Mammary epithelial cell (primary cell): ENCODE measurements at regions of chr7 and their contacts with region 1.

Region 1: DNA sequence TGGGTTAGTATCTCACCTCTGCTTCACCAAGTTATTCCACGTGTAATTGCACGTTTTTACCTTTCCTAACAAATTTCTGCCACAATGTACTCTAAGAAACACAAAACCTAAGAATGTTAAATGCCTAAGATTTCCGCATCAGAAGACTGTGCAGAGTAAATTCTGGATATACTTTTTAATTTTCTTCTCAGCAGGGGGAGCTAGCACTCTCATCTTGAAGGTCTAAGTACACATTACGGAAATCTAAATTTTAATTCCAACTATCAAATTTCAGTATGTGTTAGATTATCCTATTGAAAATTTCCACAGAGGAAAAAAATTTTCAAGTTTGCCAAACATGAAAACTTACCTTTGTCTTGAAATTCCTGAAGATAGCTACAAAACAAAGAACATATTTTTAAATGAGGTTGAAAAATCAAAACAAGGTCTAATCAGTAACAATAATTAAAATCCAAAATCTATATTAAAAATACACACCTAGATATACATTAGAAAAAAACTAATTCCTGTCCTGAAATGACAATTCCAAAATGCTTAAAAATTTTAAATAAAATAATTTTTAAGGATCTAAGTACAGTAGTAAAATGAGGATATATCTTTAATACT is 10.5 kb downstream of the SKAP2 start:
- DNase-seq: peak; percentile 52
- H3K4me3 ChIP-seq: peak overlapping the region in 1 of 3 experiments; percentile 19
- H3K27ac ChIP-seq: peak overlapping the region; percentile 96
- H3K4me1 ChIP-seq: peaks cover 24% of the 10 kb centered on the region
- H3K27me3 ChIP-seq: no peaks in the 10 kb centered on the region
- CTCF ChIP-seq: peak; percentile 48 to 65

Region 2: GRCh38 chr7:26686448-26686981 is 167.4 kb before region 1 on chr7:
- CTCF ChIA-PET with region 1: no interaction called
- dilution Hi-C with region 1: no loop called
- in situ Hi-C with region 1: no loop called
- intact Hi-C with region 1: loop called (anchors 2 kb)
- DNase-seq: peak; percentile 31
- H3K4me3 ChIP-seq: no peak overlapping the region
- H3K27ac ChIP-seq: peak overlapping the region; percentile 4
- H3K4me1 ChIP-seq: peaks cover 19% of the 10 kb centered on the region
- H3K27me3 ChIP-seq: no peaks in the 10 kb centered on the region
- CTCF ChIP-seq: peak; percentile 48 to 53

Region 3: DNA sequence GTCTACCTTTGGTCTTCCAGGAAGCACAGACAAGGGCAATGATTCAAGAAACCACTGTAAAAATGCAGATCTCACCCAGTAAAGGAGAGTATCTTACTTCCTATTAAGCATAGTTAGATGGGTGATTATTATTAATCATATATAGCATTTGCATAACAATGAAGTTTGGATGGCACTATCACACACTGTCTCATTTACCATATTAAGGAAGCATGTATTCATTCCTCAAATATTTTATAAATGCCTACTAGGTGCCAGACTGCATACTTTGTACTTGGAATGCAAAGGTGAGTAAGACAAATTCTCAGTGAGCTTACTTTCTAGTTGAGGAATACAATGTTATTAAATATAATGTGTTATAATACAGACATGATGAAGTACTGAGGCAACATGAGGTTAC is 64.3 kb after region 1 on chr7:
- CTCF ChIA-PET with region 1: no interaction called
- dilution Hi-C with region 1: no loop called
- in situ Hi-C with region 1: no loop called
- intact Hi-C with region 1: loop called (anchors 2 kb)
- DNase-seq: peak; percentile 58
- H3K4me3 ChIP-seq: no peak overlapping the region
- H3K27ac ChIP-seq: peak overlapping the region; percentile 44
- H3K4me1 ChIP-seq: peaks cover 33% of the 10 kb centered on the region
- H3K27me3 ChIP-seq: no peaks in the 10 kb centered on the region
- CTCF ChIP-seq: no peak

Region 4: GRCh38 chr7:27102581-27103442 is 248.9 kb after region 1 on chr7 and contains the start of gene HOXA2:
- CTCF ChIA-PET with region 1: interaction called, 4 read pairs
- dilution Hi-C with region 1: loop called (anchors 5 kb)
- in situ Hi-C with region 1: loop called in 1 of 2 experiments (anchors 5 kb)
- intact Hi-C with region 1: loop called (anchors 1 kb)
- DNase-seq: peak; percentile 80
- H3K4me3 ChIP-seq: peak within 1 kb of the TSS; percentile 50 to 82 (median 57)
- H3K27ac ChIP-seq: peak within 1 kb of the TSS; percentile 97
- H3K4me1 ChIP-seq: peaks cover 62% of the 10 kb centered on the region
- H3K27me3 ChIP-seq: no peaks in the 10 kb centered on the region
- CTCF ChIP-seq: no peak
- total RNA-seq, gene HOXA2: 0.50 to 1.5 TPM

Region 5: DNA sequence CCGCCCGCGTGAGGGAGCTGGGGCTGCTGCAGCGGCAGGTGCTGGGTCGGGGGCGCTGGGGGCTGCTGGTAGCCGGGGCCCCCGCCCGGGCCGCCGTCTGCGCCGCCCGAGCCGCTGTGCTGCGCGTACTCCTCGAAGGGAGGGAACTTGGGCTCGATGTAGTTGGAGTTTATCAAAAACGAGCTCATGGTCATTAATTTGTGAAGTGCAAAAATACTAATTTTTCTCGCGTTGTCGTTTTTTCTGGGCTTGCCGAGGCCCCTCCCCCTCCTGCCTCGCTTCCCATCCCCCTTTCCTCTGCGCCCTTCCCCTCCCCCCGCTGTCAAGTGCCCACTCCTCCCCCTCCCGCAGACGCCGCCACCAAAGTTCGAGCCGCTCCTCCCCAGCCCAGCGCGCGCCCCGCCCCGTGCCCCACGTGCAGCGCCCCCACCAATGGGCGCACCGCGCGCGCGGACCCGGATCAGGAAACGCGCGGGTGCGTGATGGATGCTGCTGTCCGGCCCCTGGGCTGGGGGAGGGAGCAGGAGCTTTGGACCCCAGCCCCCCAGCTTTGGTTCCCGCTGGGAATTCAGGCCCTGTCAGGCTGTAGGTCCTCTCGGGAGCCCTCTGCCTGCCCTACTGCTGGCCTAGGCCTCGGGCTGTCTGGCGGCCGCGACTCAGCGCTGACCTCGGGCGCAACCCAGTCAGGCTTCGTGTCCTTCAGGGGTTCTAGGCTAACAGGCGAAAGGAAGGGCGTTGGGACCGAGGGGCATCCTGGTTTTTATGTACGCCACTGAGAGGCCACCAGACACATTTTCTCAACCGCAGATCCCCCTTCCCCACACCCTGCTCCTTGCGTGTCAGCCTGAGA is 276.9 kb after region 1 on chr7 and contains the start of gene HOXA4:
- CTCF ChIA-PET with region 1: no interaction called
- dilution Hi-C with region 1: loop called (anchors 5 kb)
- in situ Hi-C with region 1: loop called in 1 of 2 experiments (anchors 10 kb)
- intact Hi-C with region 1: no loop called
- DNase-seq: peak; percentile 89
- H3K4me3 ChIP-seq: peak within 1 kb of the TSS; percentile 59 to 73 (median 63)
- H3K27ac ChIP-seq: peak within 1 kb of the TSS; percentile 35
- H3K4me1 ChIP-seq: peaks cover 34% of the 10 kb centered on the region
- H3K27me3 ChIP-seq: no peaks in the 10 kb centered on the region
- CTCF ChIP-seq: no peak
- total RNA-seq, gene HOXA4: 1.5 TPM in 1 of 2 donors, not detected in the other